ENCODE measurements at regions of chr4 and their contacts with region 1.

Region 1: DNA sequence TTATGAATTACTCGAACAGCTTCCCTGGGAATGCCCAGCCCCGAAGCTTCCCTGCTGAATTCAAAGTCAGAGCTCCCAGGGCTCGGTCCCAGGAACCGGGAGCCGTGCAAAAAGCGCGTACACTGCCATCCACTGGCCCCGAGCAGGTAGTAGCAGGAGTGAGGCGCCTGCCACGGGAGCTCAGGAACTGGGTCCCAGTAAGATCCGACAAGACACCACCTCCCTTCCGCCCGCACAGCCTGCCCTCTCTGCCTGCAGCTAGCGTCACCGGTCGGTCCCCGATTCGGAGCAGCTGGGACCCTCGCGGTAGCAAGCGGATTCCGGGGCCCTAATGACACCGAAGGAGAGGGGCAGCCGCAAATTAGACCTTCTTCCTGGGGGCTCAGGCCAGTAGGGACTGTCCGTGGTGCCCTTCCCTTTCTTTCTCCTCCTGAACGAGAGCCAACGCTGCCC is 1.2 kb downstream of the CORIN start:
- DNase-seq: peak; percentile 84
- H3K4me3 Mint-ChIP-seq: peak overlapping the region; percentile 75
- H3K27ac Mint-ChIP-seq: no peak overlapping the region
- H3K4me1 Mint-ChIP-seq: no peaks in the 10 kb centered on the region
- H3K27me3 Mint-ChIP-seq: no peaks in the 10 kb centered on the region
- CTCF ChIP-seq: peak; percentile 72

Region 2: GRCh38 chr4:47662975-47663374 is 173.7 kb before region 1 on chr4:
- CTCF ChIA-PET with region 1: interaction called, 102 read pairs
- POLR2A ChIA-PET with region 1: interaction called, 10 read pairs
- intact Hi-C with region 1: no loop called
- DNase-seq: peak; percentile 39
- H3K4me3 Mint-ChIP-seq: no peak overlapping the region
- H3K27ac Mint-ChIP-seq: no peak overlapping the region
- H3K4me1 Mint-ChIP-seq: peaks cover 5% of the 10 kb centered on the region
- H3K27me3 Mint-ChIP-seq: no peaks in the 10 kb centered on the region
- CTCF ChIP-seq: peak; percentile 9

Region 3: DNA sequence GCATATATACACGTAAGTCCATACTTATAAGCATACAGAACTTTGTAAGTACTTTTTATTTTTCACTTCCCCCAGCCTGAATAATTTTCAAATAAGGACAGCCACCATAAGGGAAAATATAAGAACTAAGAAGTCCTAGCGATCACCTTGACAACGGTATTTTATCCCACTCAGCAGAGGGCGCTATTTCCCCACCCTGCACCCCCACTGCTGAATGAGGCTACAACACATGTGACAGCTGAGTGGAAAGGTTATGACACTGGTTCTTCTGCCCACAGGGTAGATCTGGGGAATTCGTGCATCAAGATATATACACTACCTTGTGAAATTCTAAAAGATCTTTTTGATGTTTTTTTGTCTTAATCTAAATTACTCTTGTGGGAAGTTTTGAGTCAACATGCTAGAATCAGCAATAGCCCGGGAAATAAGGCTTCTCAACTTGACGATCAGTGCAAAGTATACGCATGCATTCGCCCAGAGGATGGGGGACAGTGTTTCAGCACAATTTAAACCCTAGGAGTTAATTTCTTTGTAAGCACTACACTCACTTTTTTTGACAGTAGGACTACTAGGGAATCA is 150.3 kb before region 1 on chr4:
- CTCF ChIA-PET with region 1: interaction called, 18 read pairs
- POLR2A ChIA-PET with region 1: no interaction called
- intact Hi-C with region 1: loop called (anchors 1 kb)
- DNase-seq: peak; percentile 62
- H3K4me3 Mint-ChIP-seq: no peak overlapping the region
- H3K27ac Mint-ChIP-seq: no peak overlapping the region
- H3K4me1 Mint-ChIP-seq: no peaks in the 10 kb centered on the region
- H3K27me3 Mint-ChIP-seq: no peaks in the 10 kb centered on the region
- CTCF ChIP-seq: peak; percentile 61

Region 4: GRCh38 chr4:47698837-47699236 is 137.8 kb before region 1 on chr4:
- CTCF ChIA-PET with region 1: interaction called, 181 read pairs
- POLR2A ChIA-PET with region 1: interaction called, 6 read pairs
- intact Hi-C with region 1: no loop called
- DNase-seq: peak; percentile 10
- H3K4me3 Mint-ChIP-seq: no peak overlapping the region
- H3K27ac Mint-ChIP-seq: no peak overlapping the region
- H3K4me1 Mint-ChIP-seq: peaks cover 5% of the 10 kb centered on the region
- H3K27me3 Mint-ChIP-seq: no peaks in the 10 kb centered on the region
- CTCF ChIP-seq: no peak

Region 5: DNA sequence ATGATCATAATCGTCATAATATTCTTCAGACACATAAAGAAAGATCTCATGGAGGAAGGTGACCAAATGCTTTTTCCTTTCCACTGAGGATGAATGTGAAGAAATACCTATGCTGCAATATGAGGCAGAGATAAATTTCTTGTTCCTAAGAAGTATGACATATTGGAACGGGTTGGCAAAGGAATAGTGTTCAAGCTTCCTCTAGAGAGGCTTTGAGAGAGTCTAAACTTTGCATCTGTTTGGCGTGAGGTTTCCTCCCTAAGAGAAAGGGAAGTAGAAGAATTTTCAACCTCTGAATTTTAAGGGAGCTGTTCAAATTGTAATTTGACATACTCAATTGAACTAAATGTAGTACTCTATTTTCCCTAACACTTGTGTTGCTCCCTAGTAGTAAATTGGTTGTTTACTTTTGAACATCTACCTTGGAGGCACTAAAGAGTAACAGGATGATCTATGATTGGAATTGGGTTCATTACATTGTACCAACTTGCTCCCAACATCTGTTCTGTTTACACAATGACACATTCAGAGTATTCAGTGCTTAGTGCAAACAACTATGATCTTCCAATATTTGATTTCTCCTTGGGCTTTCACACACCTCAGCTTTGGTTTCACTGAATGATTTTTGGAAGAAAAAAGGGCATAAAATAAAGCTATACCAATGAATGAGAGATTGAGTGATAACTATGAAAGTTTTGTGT is 120.8 kb before region 1 on chr4:
- CTCF ChIA-PET with region 1: interaction called, 22 read pairs
- POLR2A ChIA-PET with region 1: interaction called, 10 read pairs
- intact Hi-C with region 1: no loop called
- DNase-seq: no peak
- H3K4me3 Mint-ChIP-seq: no peak overlapping the region
- H3K27ac Mint-ChIP-seq: no peak overlapping the region
- H3K4me1 Mint-ChIP-seq: peaks cover 6% of the 10 kb centered on the region
- H3K27me3 Mint-ChIP-seq: no peaks in the 10 kb centered on the region
- CTCF ChIP-seq: no peak

Region 6: DNA sequence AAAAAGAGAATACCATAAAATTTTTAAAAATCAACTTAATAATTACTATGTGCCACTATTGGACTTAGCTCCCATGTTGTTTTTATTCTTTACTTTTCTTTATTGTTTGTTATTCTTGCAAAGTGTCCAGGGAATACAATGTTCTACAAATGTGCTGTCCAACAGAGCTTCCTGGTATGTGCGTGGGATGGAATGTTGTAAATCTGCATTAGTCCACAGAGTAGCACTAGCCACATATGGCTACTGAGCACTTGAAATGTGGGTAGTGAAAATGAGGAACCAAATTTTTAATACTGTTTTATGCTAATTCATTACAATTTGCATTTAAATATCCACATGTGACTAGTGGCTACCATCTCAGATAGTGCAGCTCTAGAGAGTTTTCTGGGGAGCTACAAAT is 15.5 kb after region 1 on chr4:
- CTCF ChIA-PET with region 1: interaction called, 15 read pairs
- POLR2A ChIA-PET with region 1: interaction called, 6 read pairs
- intact Hi-C with region 1: no loop called
- DNase-seq: peak; percentile 68
- H3K4me3 Mint-ChIP-seq: no peak overlapping the region
- H3K27ac Mint-ChIP-seq: peak overlapping the region; percentile 75
- H3K4me1 Mint-ChIP-seq: peaks cover 38% of the 10 kb centered on the region
- H3K27me3 Mint-ChIP-seq: no peaks in the 10 kb centered on the region
- CTCF ChIP-seq: no peak